Left cardiac atrium (tissue), 4 donors: ENCODE measurements at regions of chr11 and their contacts with region 1.

Region 1: DNA sequence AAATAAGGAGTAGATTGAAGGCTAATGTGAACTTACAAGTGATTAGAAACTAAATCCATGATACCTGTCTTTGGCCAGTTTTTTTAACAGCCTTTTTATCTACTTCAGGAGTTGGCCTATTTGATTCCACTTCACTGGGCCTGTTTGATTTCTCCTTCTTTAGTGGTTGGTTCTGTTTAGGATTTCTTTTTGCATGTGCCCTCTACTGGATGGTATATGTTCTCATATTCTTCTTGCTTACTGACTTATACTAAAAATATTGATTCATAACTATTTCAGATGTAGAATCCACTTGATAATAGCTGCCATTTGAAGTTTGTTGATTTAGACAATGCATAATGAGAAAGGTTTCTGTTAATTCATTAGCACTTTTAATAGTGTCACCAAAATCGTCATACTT is 53.9 kb downstream of the USP47 start:
- DNase-seq: no peak
- ATAC-seq: no peak

Region 2: GRCh38 chr11:11760838-11761237 is 134.8 kb before region 1 on chr11:
- intact Hi-C with region 1: no loop called
- DNase-seq: no peak
- ATAC-seq: no peak

Region 3: DNA sequence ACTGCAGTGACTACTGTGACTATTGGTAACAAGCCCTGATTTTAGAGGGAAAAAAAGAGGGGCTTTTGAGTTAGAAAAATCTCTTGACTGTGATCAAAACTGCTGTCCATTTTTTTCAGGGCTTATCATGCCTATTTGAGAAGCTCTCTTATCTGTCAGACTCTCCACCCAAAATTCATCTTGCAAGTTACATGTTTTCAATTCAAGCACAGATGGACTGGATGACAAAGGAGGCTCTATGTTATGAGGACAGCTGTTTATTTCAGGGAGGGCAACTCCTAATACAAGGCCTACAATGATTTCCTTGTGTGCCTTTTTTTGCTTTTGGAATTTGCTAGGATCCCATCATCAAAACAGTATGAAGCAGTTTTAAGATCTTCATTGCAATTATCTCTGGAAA is 89.1 kb before region 1 on chr11:
- intact Hi-C with region 1: loop called in 1 of 2 experiments (anchors 10 kb)
- DNase-seq: no peak
- ATAC-seq: peak in 1 of 2 donors; percentile 49

Region 4: DNA sequence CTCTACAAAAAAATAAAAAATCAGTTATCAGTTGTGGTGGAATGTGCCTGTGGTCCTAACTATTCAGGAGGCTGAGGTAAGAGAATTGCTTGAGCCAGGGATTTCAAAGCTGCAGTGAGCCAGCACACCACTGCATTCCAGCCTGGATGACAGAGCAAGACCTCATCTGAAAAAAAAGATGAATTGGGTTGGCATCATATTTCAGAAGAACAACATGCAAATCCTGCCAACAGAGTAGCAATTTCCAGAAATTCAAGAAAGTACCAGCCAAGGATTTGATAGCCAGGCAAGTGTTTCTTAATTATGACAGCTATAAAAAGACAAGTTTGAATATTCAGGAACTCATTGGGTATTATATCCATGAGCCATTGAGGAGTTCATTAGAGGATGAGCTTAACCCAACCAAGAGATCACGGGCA is 21.3 kb after region 1 on chr11:
- intact Hi-C with region 1: no loop called
- DNase-seq: no peak
- ATAC-seq: peak; percentile 57 to 88